ENCODE measurements at regions of chr1 and their contacts with region 1.

Region 1: DNA sequence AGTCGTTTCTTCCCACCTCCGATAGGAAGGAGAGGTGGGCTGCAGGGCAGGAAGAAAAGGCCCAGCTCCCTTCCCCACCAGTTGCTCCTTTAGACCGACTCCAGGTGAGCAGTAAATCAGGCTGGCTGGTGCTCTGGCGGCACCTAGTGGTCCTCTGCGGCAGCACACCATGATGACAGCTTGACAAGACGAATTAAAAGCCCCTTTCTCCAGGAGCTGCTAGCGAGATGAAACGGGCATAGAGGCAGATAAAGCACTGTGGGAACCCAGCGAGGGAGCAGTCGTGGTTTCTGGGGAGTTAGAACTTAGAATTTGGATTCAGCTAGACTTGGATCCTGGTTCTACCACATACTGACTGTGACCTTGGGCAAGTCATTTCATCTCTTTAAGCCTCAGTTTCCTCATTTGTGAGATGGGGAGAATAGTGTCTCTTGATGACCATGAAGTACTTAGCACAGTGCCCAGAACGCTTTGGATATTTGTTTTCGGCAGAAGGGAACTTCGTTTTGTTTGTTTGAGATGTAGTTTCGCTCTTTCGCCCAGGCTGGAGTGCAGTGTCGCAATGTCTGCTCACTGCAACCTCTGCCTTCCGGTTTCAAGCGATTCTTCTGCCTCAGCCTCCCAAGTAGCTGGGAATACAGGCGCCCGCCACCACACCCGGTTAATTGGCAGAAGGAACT is 21.8 kb upstream of the COL9A2 start:
- DNase-seq: peak; percentile 92
- H3K4me3 Mint-ChIP-seq: peak overlapping the region; percentile 17
- H3K27ac Mint-ChIP-seq: peak overlapping the region; percentile 24
- H3K4me1 Mint-ChIP-seq: peaks cover 49% of the 10 kb centered on the region
- H3K27me3 Mint-ChIP-seq: no peaks in the 10 kb centered on the region

Region 2: DNA sequence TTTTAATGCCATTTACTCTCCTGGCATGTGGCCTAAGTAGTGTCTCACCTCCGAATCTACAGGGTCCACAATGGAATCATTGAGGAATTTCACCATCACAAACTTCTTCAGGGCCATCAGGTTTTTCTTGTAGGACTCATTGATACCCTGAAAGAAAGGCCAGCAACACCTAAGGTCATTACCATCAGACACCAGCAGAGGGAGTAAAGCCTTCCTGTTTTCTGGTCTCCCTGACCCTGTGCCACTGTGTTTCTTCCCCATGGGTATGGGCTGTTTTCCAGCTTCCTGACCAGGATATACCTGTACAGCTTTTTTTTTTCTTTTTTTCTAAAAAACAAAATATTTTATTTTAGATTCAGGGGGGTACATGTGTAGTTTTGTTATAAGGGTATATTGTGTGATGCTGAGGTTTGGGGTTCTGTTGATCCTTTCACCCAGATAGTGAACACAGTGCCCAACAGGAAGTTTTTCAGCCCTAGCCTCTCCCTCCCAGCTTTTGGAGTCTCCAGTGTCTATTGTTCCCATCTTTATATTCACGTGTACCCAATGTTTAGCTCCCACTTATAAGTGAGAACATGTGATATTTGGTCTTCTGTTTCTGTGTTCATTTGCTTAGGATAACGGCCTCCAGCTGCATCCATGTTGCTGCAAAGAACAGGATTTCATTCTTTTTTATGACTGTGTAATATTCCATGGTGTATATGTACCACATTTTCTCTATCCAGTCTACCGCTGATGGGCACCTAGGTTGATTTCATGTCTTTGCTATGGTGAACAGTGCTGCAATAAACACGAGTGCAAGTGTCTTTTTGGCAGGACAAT is 260.2 kb before region 1 on chr1:
- CTCF ChIA-PET with region 1: interaction called, 82 read pairs
- POLR2A ChIA-PET with region 1: interaction called, 6 read pairs
- DNase-seq: peak; percentile 57
- H3K4me3 Mint-ChIP-seq: no peak overlapping the region
- H3K27ac Mint-ChIP-seq: no peak overlapping the region
- H3K4me1 Mint-ChIP-seq: peaks cover 20% of the 10 kb centered on the region
- H3K27me3 Mint-ChIP-seq: no peaks in the 10 kb centered on the region

Region 3: DNA sequence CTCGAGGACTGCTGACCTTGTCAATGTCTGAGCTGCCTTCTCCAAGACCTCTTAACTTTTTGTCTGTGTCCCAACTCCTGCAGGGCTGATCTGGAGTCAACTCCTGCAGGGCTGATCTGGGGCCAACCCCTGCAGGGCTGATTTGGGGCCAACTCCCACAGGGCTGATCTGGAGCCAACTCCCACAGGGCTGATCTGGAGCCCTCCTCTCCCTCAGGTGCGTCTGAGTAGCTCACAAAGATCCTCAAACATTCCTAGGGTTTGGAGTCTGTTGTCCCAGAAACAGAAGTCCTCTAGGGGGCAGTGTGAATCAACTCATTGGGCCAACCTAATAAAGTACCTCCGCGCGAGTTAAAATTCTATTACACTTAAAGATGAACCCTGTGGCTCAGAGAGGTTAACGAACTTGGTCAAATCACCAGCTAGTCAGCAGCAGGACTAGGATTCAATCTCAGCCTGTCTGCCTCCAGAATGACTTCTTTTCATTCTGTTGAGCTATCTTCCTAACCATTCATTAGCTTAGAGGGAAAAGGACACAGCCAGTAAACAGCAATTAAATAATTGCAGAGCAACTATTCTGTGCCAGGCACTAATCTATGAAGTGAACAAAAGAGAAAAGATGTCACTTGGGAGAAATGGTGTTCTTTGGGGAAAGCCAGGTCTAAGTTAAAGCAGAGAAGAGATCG is 194.9 kb before region 1 on chr1:
- CTCF ChIA-PET with region 1: interaction called, 217 read pairs
- POLR2A ChIA-PET with region 1: interaction called, 8 read pairs
- DNase-seq: peak; percentile 54
- H3K4me3 Mint-ChIP-seq: no peak overlapping the region
- H3K27ac Mint-ChIP-seq: no peak overlapping the region
- H3K4me1 Mint-ChIP-seq: peaks cover 22% of the 10 kb centered on the region
- H3K27me3 Mint-ChIP-seq: peaks cover 39% of the 10 kb centered on the region

Region 4: DNA sequence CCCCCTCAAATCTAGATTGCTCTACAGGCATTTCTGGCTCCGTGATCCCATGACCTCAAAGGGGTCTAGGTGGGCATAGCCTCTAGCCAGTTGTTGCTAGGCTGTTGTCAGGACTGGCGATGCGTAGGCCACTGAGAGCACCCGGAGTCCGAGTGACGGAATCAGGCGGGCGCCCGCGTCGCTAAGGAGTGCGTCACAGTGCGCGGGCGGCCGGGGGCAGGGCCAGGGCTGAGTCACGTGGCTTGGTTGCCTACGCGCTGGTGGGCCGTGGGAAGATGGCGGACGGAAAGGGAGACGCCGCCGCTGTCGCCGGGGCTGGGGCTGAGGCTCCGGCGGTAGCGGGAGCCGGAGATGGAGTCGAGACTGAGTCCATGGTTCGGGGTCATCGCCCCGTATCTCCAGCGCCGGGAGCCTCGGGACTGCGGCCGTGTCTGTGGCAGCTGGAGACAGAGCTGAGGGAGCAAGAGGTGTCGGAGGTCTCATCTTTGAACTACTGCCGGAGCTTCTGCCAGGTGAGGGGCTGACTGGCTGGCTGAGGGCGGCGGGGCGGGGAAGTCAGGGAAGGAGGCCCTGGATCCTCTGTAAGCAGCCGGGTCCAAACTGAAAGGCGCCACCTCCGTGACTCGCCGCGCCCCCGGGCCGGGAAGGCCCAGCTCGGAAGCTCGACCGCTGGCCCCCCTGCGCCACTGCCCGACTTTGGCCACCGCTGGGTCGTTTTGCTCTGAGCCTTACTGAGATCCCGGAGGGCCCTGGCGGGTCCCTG is 177.6 kb before region 1 on chr1 and contains the start of gene RLF:
- CTCF ChIA-PET with region 1: interaction called, 12 read pairs
- POLR2A ChIA-PET with region 1: interaction called, 4 read pairs
- DNase-seq: peak; percentile 96
- H3K4me3 Mint-ChIP-seq: no peak within 1 kb of the TSS
- H3K27ac Mint-ChIP-seq: no peak within 1 kb of the TSS
- H3K4me1 Mint-ChIP-seq: peaks cover 5% of the 10 kb centered on the region
- H3K27me3 Mint-ChIP-seq: no peaks in the 10 kb centered on the region
- total RNA-seq, gene RLF: 23.8 to 24.6 TPM

Region 5: DNA sequence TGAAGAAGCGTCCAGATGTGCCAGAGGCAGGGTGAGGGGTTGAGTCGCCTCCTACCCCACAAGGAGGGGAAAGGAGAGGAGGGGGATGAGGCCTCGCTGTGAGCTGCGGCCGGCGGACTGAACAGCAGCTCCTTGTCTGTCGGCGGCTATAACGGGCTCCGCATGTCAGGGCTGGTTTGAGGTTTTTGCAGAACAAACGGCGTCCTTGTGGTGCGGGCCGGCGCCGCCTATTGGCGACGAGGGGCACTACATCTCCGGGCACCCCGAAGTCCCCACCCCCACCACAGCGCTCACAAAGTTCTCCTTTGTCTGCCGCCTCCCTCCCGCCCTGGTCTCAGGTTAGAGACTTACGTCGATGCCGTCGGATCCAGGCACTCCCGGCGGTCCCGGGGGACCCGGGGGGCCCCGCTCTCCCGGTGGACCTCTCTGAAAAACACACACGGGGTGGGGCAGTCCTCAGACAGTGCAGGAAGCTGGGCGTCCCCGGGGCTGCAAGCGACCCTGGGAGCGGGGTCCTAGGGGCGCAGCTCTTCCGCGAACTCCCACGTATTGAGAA is 23.6 kb before region 1 on chr1:
- CTCF ChIA-PET with region 1: interaction called, 92 read pairs
- POLR2A ChIA-PET with region 1: interaction called, 23 read pairs
- DNase-seq: peak; percentile 85
- H3K4me3 Mint-ChIP-seq: peak overlapping the region; percentile 66
- H3K27ac Mint-ChIP-seq: no peak overlapping the region
- H3K4me1 Mint-ChIP-seq: peaks cover 59% of the 10 kb centered on the region
- H3K27me3 Mint-ChIP-seq: peaks cover 25% of the 10 kb centered on the region

Region 6: DNA sequence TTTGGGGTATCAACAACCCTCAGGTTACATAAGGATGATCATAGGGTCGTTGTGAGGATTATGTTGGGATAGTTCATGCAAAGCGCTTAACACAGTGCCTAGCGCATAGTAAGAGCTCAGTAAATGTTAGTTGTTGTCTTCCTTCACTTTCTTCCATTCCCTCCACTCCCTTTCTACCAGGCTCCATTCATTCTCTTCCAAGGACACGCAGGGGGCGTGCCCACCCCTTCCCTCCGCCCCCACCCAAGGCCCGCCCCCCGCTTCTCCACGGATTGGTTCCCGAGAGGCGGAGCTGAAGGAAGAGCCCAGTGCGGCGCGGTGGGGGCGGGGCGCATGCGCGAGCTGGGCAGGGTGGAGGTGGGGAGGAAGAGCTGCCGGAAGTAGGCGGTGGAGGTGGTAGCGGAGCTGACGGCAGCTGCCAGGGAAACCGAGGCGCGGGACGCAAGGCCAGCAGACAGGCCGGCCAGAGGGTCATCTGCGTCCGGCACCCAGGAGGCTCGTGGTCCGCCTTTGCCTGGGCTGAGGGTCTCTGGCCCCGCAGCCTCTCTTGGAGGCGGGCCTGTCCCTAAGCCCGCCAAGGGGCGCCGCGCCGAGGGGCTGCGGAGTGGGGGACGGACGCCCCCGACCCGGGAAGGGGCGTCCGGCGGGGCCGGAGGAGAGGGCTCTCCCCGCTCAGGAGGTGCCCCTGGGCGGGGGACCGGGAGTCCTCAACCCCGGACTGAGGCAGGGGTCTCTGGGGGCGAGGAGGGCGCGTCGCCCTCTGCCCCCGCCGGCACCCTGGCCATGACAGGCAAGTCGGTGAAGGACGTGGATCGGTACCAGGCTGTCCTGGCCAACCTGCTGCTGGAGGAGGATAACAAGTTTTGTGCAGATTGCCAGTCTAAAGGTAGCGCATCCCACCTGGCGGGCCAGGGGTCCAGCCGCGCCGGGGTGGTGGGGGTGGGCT is 34.7 kb after region 1 on chr1 and contains the start of gene SMAP2:
- CTCF ChIA-PET with region 1: interaction called, 21 read pairs
- POLR2A ChIA-PET with region 1: interaction called, 41 read pairs
- DNase-seq: peak; percentile 96
- H3K4me3 Mint-ChIP-seq: peak within 1 kb of the TSS; percentile 99
- H3K27ac Mint-ChIP-seq: peak within 1 kb of the TSS; percentile 99
- H3K4me1 Mint-ChIP-seq: peaks cover 49% of the 10 kb centered on the region
- H3K27me3 Mint-ChIP-seq: no peaks in the 10 kb centered on the region
- total RNA-seq, gene SMAP2: 172 to 173 TPM

Region 7: DNA sequence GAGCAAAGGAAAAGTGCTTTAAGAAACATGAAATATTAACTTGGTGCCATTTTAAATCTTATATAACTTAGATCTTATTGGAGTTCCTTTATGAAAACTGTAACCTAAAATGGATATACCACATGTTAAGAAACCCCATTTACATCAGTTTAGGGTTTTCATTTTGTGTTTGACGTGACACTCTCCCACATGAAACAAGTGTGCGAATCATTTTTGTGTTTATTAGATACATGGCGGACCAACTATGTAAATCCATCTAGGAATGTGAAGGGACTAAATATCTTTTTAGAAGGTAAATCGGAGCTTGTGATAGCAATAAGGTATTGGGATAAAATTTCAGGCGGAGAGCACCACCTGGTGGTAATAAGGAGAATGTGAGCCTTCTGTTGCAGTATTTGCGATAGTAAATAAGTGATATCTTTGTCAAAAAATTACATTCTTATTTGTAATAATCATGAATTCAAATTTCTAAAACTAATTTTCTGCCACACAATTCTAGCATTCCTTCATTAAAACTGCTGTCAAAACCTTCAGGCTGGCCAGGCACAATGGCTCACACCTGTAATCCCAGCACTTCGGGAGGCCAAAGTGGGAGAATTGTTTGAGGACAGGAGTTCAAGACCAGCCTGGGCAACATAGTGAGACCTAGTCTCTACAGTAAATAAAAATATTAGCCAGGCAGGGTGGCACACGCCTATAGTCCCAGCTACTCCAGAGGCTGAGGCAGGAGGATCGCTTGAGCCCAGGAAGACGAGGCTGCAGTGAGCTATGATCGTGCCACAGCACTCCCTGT is 66.0 kb after region 1 on chr1:
- CTCF ChIA-PET with region 1: interaction called, 59 read pairs
- POLR2A ChIA-PET with region 1: interaction called, 5 read pairs
- DNase-seq: peak; percentile 47
- H3K4me3 Mint-ChIP-seq: no peak overlapping the region
- H3K27ac Mint-ChIP-seq: peak overlapping the region; percentile 17
- H3K4me1 Mint-ChIP-seq: peaks cover 54% of the 10 kb centered on the region
- H3K27me3 Mint-ChIP-seq: no peaks in the 10 kb centered on the region

Region 8: GRCh38 chr1:40476924-40477677 is 138.2 kb after region 1 on chr1 and contains the start of gene ZFP69:
- CTCF ChIA-PET with region 1: no interaction called
- POLR2A ChIA-PET with region 1: no interaction called
- DNase-seq: peak; percentile 72
- H3K4me3 Mint-ChIP-seq: peak within 1 kb of the TSS; percentile 71
- H3K27ac Mint-ChIP-seq: peak within 1 kb of the TSS; percentile 36
- H3K4me1 Mint-ChIP-seq: peaks cover 17% of the 10 kb centered on the region
- H3K27me3 Mint-ChIP-seq: no peaks in the 10 kb centered on the region
- total RNA-seq, gene ZFP69: 2.3 to 2.5 TPM

Region 9: GRCh38 chr1:40583980-40584379 is 245.1 kb after region 1 on chr1:
- CTCF ChIA-PET with region 1: no interaction called
- POLR2A ChIA-PET with region 1: no interaction called
- DNase-seq: no peak
- H3K4me3 Mint-ChIP-seq: no peak overlapping the region
- H3K27ac Mint-ChIP-seq: no peak overlapping the region
- H3K4me1 Mint-ChIP-seq: peaks cover 11% of the 10 kb centered on the region
- H3K27me3 Mint-ChIP-seq: peaks cover 3% of the 10 kb centered on the region

Region 10: DNA sequence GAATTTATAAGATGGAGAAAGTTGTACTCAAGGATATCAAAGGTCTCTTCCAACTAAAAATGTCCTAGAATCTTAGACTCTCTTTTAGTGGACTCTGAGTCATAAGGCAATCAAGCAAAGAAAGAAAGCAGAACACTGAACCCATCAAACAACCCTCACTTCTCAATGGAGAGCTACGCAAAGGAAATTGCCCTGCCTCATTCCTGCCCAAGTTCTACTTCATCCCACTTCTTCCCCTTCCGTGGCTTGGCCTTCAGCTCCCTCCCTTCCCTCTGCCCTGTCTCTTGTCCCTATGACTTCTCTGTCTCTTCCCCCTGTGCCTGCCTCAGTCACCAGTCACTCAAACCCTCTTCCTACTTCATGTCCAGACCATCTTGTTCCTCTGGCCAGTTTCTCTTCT is 268.1 kb after region 1 on chr1:
- CTCF ChIA-PET with region 1: no interaction called
- POLR2A ChIA-PET with region 1: no interaction called
- DNase-seq: no peak
- H3K4me3 Mint-ChIP-seq: no peak overlapping the region
- H3K27ac Mint-ChIP-seq: no peak overlapping the region
- H3K4me1 Mint-ChIP-seq: no peaks in the 10 kb centered on the region
- H3K27me3 Mint-ChIP-seq: peaks cover 4% of the 10 kb centered on the region